Mammary epithelial cell (primary cell): ENCODE measurements at regions of chr9 and their contacts with region 1.

Region 1: GRCh38 chr9:21789541-21790037 is 12.8 kb upstream of the MTAP start:
- DNase-seq: peak; percentile 83
- H3K4me3 ChIP-seq: peak overlapping the region in 2 of 3 experiments; percentile 1 to 30
- H3K27ac ChIP-seq: peak overlapping the region; percentile 30
- H3K4me1 ChIP-seq: peaks cover 6% of the 10 kb centered on the region
- H3K27me3 ChIP-seq: no peaks in the 10 kb centered on the region
- CTCF ChIP-seq: peak; percentile 69 to 85

Region 2: GRCh38 chr9:21244836-21245235 is 544.8 kb before region 1 on chr9:
- CTCF ChIA-PET with region 1: no interaction called
- dilution Hi-C with region 1: no loop called
- in situ Hi-C with region 1: loop called in 1 of 2 experiments (anchors 25 kb)
- intact Hi-C with region 1: no loop called
- DNase-seq: no peak
- H3K4me3 ChIP-seq: no peak overlapping the region
- H3K27ac ChIP-seq: no peak overlapping the region
- H3K4me1 ChIP-seq: no peaks in the 10 kb centered on the region
- H3K27me3 ChIP-seq: peaks cover 10% of the 10 kb centered on the region
- CTCF ChIP-seq: no peak

Region 3: DNA sequence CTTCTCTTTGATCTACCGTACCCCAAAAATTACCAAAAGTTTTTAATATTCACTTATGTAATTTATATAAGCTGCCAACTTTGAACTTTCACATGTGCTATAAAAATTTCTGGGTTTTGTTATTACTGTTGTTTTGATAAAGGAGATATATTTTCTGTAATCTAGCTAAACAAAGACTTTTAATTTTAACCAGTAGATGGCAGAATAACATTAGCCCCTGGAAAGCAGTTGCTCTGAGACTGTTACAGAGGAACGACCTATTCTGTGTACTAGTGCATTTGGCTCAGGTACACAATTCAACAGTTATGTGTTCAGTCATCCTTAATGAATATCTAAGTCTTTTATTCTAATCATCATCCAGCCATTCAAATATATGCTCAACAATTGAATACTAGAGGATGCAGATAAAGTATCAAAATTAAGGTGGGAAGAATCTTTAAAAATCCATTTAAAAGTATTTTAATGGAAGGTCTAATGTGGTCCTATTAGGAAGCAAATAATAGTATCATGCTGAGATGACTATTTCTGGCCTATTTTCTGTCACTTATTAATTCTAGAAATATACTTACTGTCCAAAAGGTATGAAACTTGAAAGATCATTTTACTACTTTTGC is 463.0 kb before region 1 on chr9:
- CTCF ChIA-PET with region 1: no interaction called
- dilution Hi-C with region 1: no loop called
- in situ Hi-C with region 1: loop called in 1 of 2 experiments (anchors 10 kb)
- intact Hi-C with region 1: no loop called
- DNase-seq: peak; percentile 27
- H3K4me3 ChIP-seq: no peak overlapping the region
- H3K27ac ChIP-seq: no peak overlapping the region
- H3K4me1 ChIP-seq: peaks cover 11% of the 10 kb centered on the region
- H3K27me3 ChIP-seq: no peaks in the 10 kb centered on the region
- CTCF ChIP-seq: peak; percentile 53 to 66

Region 4: GRCh38 chr9:21465859-21466518 is 323.6 kb before region 1 on chr9:
- CTCF ChIA-PET with region 1: no interaction called
- dilution Hi-C with region 1: no loop called
- in situ Hi-C with region 1: no loop called
- intact Hi-C with region 1: loop called (anchors 1 kb)
- DNase-seq: peak; percentile 36
- H3K4me3 ChIP-seq: no peak overlapping the region
- H3K27ac ChIP-seq: no peak overlapping the region
- H3K4me1 ChIP-seq: no peaks in the 10 kb centered on the region
- H3K27me3 ChIP-seq: no peaks in the 10 kb centered on the region
- CTCF ChIP-seq: peak; percentile 62 to 69

Region 5: GRCh38 chr9:21559424-21560280 is 229.9 kb before region 1 on chr9:
- CTCF ChIA-PET with region 1: interaction called, 3 read pairs
- dilution Hi-C with region 1: loop called (anchors 5 kb)
- in situ Hi-C with region 1: loop called (anchors 10 kb)
- intact Hi-C with region 1: loop called (anchors 1 kb)
- DNase-seq: peak; percentile 85
- H3K4me3 ChIP-seq: peak overlapping the region; percentile 90 to 94 (median 91)
- H3K27ac ChIP-seq: peak overlapping the region; percentile 99
- H3K4me1 ChIP-seq: peaks cover 16% of the 10 kb centered on the region
- H3K27me3 ChIP-seq: no peaks in the 10 kb centered on the region
- CTCF ChIP-seq: no peak

Region 6: GRCh38 chr9:21677834-21678233 is 111.8 kb before region 1 on chr9:
- CTCF ChIA-PET with region 1: no interaction called
- dilution Hi-C with region 1: loop called (anchors 5 kb)
- in situ Hi-C with region 1: no loop called
- intact Hi-C with region 1: loop called (anchors 1 kb)
- DNase-seq: peak; percentile 97
- H3K4me3 ChIP-seq: peak overlapping the region in 2 of 3 experiments; percentile 25 to 45
- H3K27ac ChIP-seq: peak overlapping the region; percentile 99
- H3K4me1 ChIP-seq: peaks cover 70% of the 10 kb centered on the region
- H3K27me3 ChIP-seq: no peaks in the 10 kb centered on the region
- CTCF ChIP-seq: no peak